A549 (cell line): ENCODE measurements at regions of chr19 and their contacts with region 1.

Region 1: GRCh38 chr19:48340995-48341394 is 15.6 kb downstream of the EMP3 start:
- DNase-seq: no peak
- ATAC-seq: peak; percentile 5 to 26; a peak in 2 of 6 replicates
- H3K4me3 ChIP-seq: no peak overlapping the region
- H3K27ac ChIP-seq: peak overlapping the region in 1 of 2 experiments; percentile 6; a peak in 2 of 6 replicates
- H3K4me1 ChIP-seq: peaks cover 20% of the 10 kb centered on the region
- CTCF ChIP-seq: no peak
- EP300 ChIP-seq: no peak
- POLR2A ChIP-seq: no peak
- RAD21 ChIP-seq: no peak

Region 2: DNA sequence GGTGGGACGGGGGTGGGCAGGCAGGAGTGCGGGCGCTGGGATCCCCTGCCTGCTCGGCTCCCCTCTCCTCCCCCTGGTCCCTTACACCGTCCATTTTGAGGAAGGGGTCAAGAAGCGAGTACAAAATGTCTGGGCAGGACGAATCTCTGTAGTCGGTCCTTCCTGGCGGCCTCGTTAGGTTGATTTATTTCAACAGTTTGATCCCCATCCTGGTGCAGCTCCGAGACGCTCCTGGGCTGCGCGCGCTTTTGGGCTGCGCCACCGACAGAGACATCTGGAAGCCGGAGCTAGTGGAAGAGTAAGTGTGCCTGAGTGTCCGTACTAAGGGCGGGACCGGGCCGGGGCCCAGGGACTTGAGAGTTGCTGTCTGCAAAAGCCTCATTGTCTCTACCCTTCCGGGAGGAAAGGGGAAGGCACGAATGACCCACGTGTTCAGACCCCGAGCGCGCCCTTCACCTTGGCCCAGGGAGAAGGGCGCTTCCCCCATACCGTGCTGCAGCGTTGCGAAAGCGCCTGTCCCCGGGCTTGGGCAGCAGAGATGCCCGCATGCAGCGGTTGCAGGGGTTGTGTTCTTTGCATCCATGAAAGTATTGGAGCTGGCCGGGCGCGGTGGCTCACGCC is 69.4 kb before region 1 on chr19:
- CTCF ChIA-PET with region 1: interaction called, 20 read pairs
- POLR2A ChIA-PET with region 1: no interaction called
- DNase-seq: peak; percentile 75 to 90
- ATAC-seq: peak; percentile 85 to 87
- H3K4me3 ChIP-seq: peak overlapping the region; percentile 64
- H3K27ac ChIP-seq: peak overlapping the region; percentile 80 to 89
- H3K4me1 ChIP-seq: 0 out of 3 replicates have a peak, but pooled peaks cover 11% of the 10 kb centered on the region
- CTCF ChIP-seq: no peak
- EP300 ChIP-seq: no peak
- POLR2A ChIP-seq: no peak; the same call in 1 of the 2 replicates
- RAD21 ChIP-seq: no peak

Region 3: GRCh38 chr19:48284896-48285295 is 56.1 kb before region 1 on chr19:
- CTCF ChIA-PET with region 1: no interaction called
- POLR2A ChIA-PET with region 1: no interaction called
- DNase-seq: no peak
- ATAC-seq: no peak
- H3K4me3 ChIP-seq: no peak overlapping the region
- H3K27ac ChIP-seq: no peak overlapping the region
- H3K4me1 ChIP-seq: no peaks in the 10 kb centered on the region
- CTCF ChIP-seq: no peak
- EP300 ChIP-seq: no peak
- POLR2A ChIP-seq: no peak
- RAD21 ChIP-seq: no peak

Region 4: GRCh38 chr19:48381178-48381950 is 40.4 kb after region 1 on chr19:
- CTCF ChIA-PET with region 1: no interaction called
- POLR2A ChIA-PET with region 1: no interaction called
- DNase-seq: no peak
- ATAC-seq: peak; percentile 22 to 48; a peak in 1 of 6 replicates
- H3K4me3 ChIP-seq: no peak overlapping the region
- H3K27ac ChIP-seq: no peak overlapping the region
- H3K4me1 ChIP-seq: no peaks in the 10 kb centered on the region
- CTCF ChIP-seq: no peak
- EP300 ChIP-seq: no peak
- POLR2A ChIP-seq: no peak
- RAD21 ChIP-seq: no peak

Region 5: DNA sequence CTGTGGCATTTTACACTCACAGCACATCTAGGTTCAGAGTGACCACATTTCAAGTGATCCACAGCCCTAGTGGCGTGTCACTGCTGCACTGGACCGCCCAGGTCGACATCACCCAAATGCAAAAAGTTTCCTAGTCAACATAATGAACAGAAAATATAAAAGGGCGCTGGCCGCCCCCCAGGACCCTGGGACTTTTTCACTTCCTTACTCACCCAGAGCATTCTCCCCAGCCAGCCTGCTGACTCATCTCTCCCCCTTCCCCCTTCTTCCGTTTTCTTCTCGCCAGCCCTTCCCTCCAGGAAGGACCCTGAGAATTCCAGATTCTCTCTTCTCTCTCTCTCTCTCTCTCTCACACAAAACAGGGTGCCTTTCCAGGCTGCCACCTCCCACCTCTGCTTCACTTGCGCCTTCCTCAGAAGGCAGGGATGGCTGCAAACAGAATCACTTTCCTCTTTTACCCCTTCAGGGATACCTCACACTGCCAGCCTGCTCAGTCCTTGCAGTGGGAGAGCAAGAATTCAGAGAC is 83.8 kb after region 1 on chr19:
- CTCF ChIA-PET with region 1: no interaction called
- POLR2A ChIA-PET with region 1: no interaction called
- DNase-seq: peak; percentile 87 to 92
- ATAC-seq: peak; percentile 90 to 93
- H3K4me3 ChIP-seq: no peak overlapping the region
- H3K27ac ChIP-seq: peak overlapping the region; percentile 75 to 88
- H3K4me1 ChIP-seq: peaks cover 20% of the 10 kb centered on the region
- CTCF ChIP-seq: no peak
- EP300 ChIP-seq: peak in 1 of 2 experiments; percentile 34; a peak in 1 of 5 replicates
- POLR2A ChIP-seq: peak; percentile 20; the same call in 1 of the 2 replicates
- RAD21 ChIP-seq: 0 out of 5 replicates have a peak, but pooled peaks have one; percentile 8 to 10